HEK293 (cell line): ENCODE measurements at regions of chr22 and their contacts with region 1.

Region 1: GRCh38 chr22:17057959-17058814 is 26.6 kb upstream of the IL17RA start:
- H3K4me3 ChIP-seq: no peak overlapping the region
- H3K27ac ChIP-seq: no peak overlapping the region
- H3K4me1 ChIP-seq: no peaks in the 10 kb centered on the region
- CTCF ChIP-seq: peak; percentile 83

Region 2: GRCh38 chr22:16912281-16912680 is 145.9 kb before region 1 on chr22:
- CTCF ChIA-PET with region 1: interaction called, 106 read pairs
- POLR2A ChIA-PET with region 1: no interaction called
- H3K4me3 ChIP-seq: no peak overlapping the region
- H3K27ac ChIP-seq: no peak overlapping the region
- H3K4me1 ChIP-seq: no peaks in the 10 kb centered on the region
- CTCF ChIP-seq: no peak

Region 3: GRCh38 chr22:16925407-16925966 is 132.7 kb before region 1 on chr22:
- CTCF ChIA-PET with region 1: interaction called, 17 read pairs
- POLR2A ChIA-PET with region 1: no interaction called
- H3K4me3 ChIP-seq: no peak overlapping the region
- H3K27ac ChIP-seq: no peak overlapping the region
- H3K4me1 ChIP-seq: no peaks in the 10 kb centered on the region
- CTCF ChIP-seq: no peak

Region 4: DNA sequence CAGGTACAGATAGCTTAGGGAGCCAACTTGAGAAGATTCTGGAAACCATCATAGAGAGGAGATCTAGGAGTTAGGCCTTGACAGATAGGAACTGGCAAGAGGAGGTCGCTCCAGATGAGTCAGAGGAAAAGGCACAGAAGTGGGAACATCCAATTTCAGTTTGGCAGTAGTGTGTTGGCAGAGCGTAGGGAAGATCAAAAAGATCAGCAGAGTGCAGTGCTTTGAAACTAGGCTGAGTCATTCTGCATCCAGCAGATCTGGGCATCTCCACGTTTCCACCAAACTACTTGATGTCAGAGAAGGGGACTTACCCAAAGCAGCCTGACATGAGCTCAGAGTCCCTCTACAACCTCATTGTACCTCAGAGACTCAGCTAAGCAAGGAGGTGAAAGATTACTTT is 108.6 kb before region 1 on chr22:
- CTCF ChIA-PET with region 1: interaction called, 12 read pairs
- POLR2A ChIA-PET with region 1: no interaction called
- H3K4me3 ChIP-seq: no peak overlapping the region
- H3K27ac ChIP-seq: no peak overlapping the region
- H3K4me1 ChIP-seq: no peaks in the 10 kb centered on the region
- CTCF ChIP-seq: no peak

Region 5: GRCh38 chr22:17035246-17035645 is 22.9 kb before region 1 on chr22:
- CTCF ChIA-PET with region 1: interaction called, 14 read pairs
- POLR2A ChIA-PET with region 1: no interaction called
- H3K4me3 ChIP-seq: no peak overlapping the region
- H3K27ac ChIP-seq: no peak overlapping the region
- H3K4me1 ChIP-seq: no peaks in the 10 kb centered on the region
- CTCF ChIP-seq: no peak

Region 6: GRCh38 chr22:17077255-17077654 is 19.1 kb after region 1 on chr22:
- CTCF ChIA-PET with region 1: interaction called, 17 read pairs
- POLR2A ChIA-PET with region 1: no interaction called
- H3K4me3 ChIP-seq: no peak overlapping the region
- H3K27ac ChIP-seq: no peak overlapping the region
- H3K4me1 ChIP-seq: no peaks in the 10 kb centered on the region
- CTCF ChIP-seq: no peak

Region 7: DNA sequence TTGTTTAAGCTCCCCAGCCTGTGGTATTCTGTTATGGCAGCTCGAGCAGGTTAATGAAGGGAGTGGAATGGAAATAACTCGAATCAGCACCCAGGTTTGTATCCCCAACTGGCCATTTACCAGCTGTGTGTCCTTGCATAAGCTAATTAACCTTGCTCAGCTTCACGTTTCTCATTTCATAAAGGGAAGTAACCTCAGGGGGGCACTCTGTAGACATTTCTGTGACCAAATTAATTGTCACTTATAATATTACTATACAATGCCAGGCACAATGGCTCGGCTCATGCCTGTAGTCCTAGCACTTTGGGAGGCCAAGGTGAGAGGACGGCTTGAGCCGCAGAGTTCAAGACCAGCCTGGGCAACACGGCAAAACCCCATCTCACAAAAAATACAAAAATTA is 147.2 kb after region 1 on chr22:
- CTCF ChIA-PET with region 1: no interaction called
- POLR2A ChIA-PET with region 1: no interaction called
- H3K4me3 ChIP-seq: no peak overlapping the region
- H3K27ac ChIP-seq: no peak overlapping the region
- H3K4me1 ChIP-seq: no peaks in the 10 kb centered on the region
- CTCF ChIP-seq: no peak